Heart left ventricle (tissue), 16 donors: ENCODE measurements at regions of chr15 and their contacts with region 1.

Region 1: DNA sequence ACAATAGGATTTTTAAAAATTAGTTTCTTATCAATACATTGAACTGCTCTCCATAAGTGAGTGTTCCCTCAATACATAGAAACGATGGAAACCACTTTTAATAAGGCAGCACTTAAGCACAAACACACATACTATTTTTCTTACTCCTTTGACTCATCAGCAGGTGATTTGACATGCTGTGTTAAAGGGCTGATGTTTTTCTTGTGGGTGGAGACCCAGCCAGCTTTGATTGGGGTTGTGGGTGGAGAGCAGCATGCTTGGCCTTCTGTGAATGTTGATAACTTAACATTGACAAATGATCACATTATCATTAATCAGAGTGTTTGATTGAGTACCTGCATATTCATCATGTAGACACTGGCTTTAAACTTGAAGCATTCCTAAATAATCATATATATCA is 223.0 kb upstream of the DPH6 start:
- DNase-seq: no peak
- ATAC-seq: no peak
- H3K4me3 ChIP-seq: no peak overlapping the region
- H3K27ac ChIP-seq: no peak overlapping the region
- H3K4me1 ChIP-seq: peaks cover 0 to 10% (median 0%) of the 10 kb centered on the region in 12 donors
- H3K27me3 ChIP-seq: no peaks in the 10 kb centered on the region
- CTCF ChIP-seq: no peak
- POLR2A ChIP-seq: no peak

Region 2: DNA sequence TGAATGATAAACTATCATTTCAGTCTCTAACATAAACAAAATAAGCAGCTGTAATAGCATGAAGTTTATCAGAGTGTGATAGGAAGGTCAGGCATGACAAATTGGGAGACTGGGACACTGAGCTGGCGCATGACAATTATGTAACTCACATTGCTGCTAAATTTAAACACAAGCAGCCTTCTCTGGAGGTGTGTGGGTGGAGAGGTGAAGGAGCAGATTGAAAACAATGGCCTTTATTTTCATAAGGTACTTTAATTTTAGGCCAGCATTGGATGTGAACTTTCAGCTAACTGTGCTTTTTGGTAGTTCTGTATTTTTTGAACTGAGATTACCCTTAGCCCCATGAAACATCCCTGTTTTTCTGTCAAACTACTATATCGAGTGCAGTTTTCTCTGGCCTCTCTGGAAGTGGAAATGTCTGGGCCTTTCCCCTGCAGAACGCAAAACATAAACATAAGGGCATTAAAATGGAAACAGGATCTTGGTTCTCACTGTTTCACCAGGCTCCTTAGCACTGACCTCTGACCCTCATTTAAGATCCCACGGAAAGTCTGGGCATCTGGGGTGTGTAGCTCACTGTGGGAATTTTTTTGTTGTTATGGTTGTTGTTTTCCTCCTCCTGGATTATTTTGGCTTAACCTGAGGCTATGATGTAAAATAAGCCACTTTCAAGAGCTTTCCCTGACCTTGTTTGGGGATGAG is 62.9 kb before region 1 on chr15:
- intact Hi-C with region 1: loop called in 1 of 10 experiments (anchors 10 kb)
- DNase-seq: peak in 4 of 5 donors; percentile 50 to 54 (median 52)
- ATAC-seq: peak; percentile 95 to 97 (median 96)
- H3K4me3 ChIP-seq: no peak overlapping the region
- H3K27ac ChIP-seq: peak overlapping the region; percentile 51 to 93 (median 78)
- H3K4me1 ChIP-seq: peaks cover 0 to 33% (median 18%) of the 10 kb centered on the region in 12 donors
- H3K27me3 ChIP-seq: no peaks in the 10 kb centered on the region
- CTCF ChIP-seq: no peak
- POLR2A ChIP-seq: no peak